Posterior vena cava (tissue), 2 donors: ENCODE measurements at regions of chr5 and their contacts with region 1.

Region 1: DNA sequence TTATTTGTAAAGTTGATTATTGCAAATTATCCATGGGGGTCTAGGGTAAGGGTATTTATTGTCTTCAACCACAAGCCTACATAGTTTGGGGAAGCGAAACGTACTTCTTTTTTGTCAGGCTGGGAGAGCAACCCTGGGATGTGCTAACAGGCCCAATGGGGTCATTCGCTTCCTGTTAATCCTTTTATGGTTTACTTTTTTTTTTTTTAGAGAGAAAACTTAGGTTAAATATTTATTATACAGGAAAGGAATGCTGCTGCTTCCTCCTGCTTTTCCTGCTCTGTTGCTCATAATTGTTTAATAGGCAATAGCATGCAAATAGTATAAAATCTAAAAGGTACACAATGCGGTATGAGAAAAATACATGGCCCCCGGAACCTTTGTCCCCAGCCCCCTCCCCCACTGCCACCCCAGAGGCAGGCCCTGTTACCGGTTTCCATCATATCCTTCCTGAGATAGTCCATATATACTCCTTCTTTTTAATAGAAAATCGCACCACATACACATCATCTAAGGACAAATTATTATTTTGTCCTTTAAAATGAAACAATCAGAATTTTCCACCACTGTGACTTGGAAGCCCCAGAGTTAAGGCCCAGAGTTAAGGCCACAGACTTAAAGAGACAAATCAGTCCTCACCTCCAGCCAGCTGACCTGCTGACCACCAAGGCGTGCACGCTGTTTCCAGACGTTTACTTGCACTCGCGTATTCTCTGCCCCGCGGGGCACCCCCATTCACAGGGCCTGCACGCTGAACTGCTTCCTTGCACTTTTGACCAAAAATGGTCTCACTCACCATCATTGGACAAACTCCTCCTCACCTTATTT is 83.9 kb downstream of the NDFIP1 start:
- DNase-seq: no peak

Region 2: DNA sequence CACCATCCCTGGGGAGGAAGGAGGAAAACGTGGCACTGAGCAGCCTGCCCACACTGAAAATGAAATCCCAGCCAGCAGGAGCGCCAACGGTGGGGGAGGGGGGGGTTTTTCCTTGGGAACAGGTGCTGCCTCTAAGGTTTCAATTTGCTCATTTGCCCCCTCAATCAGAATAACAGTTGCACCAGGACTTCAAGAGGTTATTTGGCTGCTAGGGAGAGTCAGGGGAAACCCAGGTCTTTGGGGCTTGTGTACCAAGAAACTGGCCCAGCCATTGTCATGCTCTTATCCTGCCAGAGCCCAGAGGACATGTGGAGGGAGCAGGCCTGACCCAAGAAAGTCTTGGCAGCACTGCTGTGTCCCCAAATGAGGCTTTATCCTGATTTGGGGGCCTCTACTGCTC is 17.5 kb before region 1 on chr5:
- intact Hi-C with region 1: loop called in 1 of 2 experiments (anchors 1 kb)
- DNase-seq: no peak

Region 3: DNA sequence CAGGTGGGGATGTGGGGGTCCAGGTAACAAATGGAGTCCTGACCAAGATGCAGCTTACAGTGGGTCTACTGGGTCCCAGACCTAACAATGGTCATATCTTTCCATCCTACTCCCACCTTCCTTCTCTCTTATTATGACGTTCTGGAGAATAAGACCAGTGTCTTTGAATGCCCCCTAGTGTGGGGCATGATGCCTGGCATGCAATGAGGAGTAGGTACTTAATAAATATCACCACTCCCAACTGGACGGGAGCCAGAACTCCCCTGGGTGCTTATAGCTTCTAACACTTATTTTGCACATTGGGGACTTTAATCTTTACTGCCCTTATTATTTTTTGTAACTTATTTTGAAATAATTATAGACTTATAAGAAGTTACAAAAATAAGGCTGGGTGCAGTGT is 14.3 kb after region 1 on chr5:
- intact Hi-C with region 1: no loop called
- DNase-seq: no peak

Region 4: GRCh38 chr5:142600611-142601358 is 408.3 kb after region 1 on chr5:
- intact Hi-C with region 1: no loop called
- DNase-seq: no peak